Activated CD4-positive, alpha-beta T cell treated with anti-CD3 and anti-CD28 coated beads, Interleukin-2, amount 10 ng/mL, durations not matched to agents 24 days and 14 days (primary cell): ENCODE measurements at regions of chrX and their contacts with region 1.

Region 1: GRCh38 chrX:20547611-20548051 is 280.9 kb upstream of the RPS6KA3 start:
- DNase-seq: no peak
- H3K4me3 Mint-ChIP-seq: no peak overlapping the region
- H3K27ac Mint-ChIP-seq: peak overlapping the region; percentile 20
- H3K4me1 Mint-ChIP-seq: peaks cover 2% of the 10 kb centered on the region
- H3K27me3 Mint-ChIP-seq: peaks cover under 1% of the 10 kb centered on the region

Region 2: DNA sequence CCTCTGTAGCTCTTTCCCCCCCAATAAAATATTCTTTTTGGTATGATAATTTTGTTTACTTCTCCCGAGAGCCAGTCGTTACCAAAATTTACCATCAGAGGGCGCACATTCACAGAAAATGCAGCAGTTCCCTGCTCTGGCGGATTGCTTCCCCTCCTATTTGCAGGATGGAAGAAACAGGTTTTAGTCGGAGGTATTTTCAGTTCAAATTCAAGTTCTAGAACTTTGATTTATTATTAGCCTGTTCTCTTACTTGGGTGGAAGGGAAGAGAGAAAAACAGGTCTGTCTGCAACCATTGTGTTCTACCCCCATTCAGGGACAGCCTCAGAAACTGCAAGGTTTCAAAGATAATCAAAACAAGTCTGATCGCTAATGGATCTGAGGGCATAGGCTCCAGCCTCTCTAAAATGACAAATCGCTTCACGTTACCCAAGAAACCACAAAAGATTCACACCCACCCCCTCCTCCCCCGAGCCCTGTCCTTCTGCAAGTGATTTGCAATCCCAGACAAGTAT is 17.2 kb before region 1 on chrX:
- intact Hi-C with region 1: no loop called
- DNase-seq: peak; percentile 86
- H3K4me3 Mint-ChIP-seq: peak overlapping the region; percentile 10
- H3K27ac Mint-ChIP-seq: no peak overlapping the region
- H3K4me1 Mint-ChIP-seq: peaks cover 10% of the 10 kb centered on the region
- H3K27me3 Mint-ChIP-seq: peaks cover 48% of the 10 kb centered on the region

Region 3: GRCh38 chrX:20567108-20567507 is 19.5 kb after region 1 on chrX:
- intact Hi-C with region 1: loop called (anchors 1 kb)
- DNase-seq: no peak
- H3K4me3 Mint-ChIP-seq: no peak overlapping the region
- H3K27ac Mint-ChIP-seq: no peak overlapping the region
- H3K4me1 Mint-ChIP-seq: peaks cover 5% of the 10 kb centered on the region
- H3K27me3 Mint-ChIP-seq: peaks cover 8% of the 10 kb centered on the region

Region 4: DNA sequence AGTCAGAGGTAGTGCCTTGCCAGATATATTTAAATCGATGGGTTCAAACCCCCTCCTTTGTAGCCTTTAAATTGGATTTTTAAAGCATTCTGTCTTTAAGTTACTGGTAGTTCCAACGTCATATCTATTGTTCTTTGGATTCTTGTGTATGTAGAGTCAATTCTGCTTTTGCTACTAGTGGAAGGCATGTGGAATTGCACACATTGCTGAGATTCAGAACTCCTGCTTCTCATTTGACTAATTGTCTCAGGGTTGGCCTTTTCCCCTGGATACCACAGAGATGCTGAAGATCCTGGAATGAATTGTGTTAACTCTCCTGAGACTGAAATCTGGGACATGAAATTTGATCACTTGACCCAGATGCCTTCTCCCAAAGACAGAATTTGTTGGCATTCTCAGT is 47.4 kb after region 1 on chrX:
- intact Hi-C with region 1: loop called (anchors 10 kb)
- DNase-seq: no peak
- H3K4me3 Mint-ChIP-seq: no peak overlapping the region
- H3K27ac Mint-ChIP-seq: no peak overlapping the region
- H3K4me1 Mint-ChIP-seq: peaks cover 14% of the 10 kb centered on the region
- H3K27me3 Mint-ChIP-seq: no peaks in the 10 kb centered on the region